BJ (cell line): ENCODE measurements at regions of chr3 and their contacts with region 1.

Region 1: GRCh38 chr3:119841803-119842477 is 60.0 kb downstream of the NR1I2 start:
- DNase-seq: peak; percentile 7
- H3K4me3 ChIP-seq: no peak overlapping the region
- H3K27me3 ChIP-seq: no peaks in the 10 kb centered on the region
- CTCF ChIP-seq: no peak

Region 2: GRCh38 chr3:119716998-119717397 is 124.9 kb before region 1 on chr3:
- CTCF ChIA-PET with region 1: no interaction called
- POLR2A ChIA-PET with region 1: interaction called, 12 read pairs
- DNase-seq: no peak
- H3K4me3 ChIP-seq: no peak overlapping the region
- H3K27me3 ChIP-seq: no peaks in the 10 kb centered on the region
- CTCF ChIP-seq: no peak

Region 3: GRCh38 chr3:119861681-119862080 is 19.7 kb after region 1 on chr3:
- CTCF ChIA-PET with region 1: no interaction called
- POLR2A ChIA-PET with region 1: no interaction called
- DNase-seq: no peak
- H3K4me3 ChIP-seq: no peak overlapping the region
- H3K27me3 ChIP-seq: no peaks in the 10 kb centered on the region
- CTCF ChIP-seq: no peak